ENCODE measurements at regions of chr1 and their contacts with region 1.

Region 1: GRCh38 chr1:203117611-203118575 is 9.6 kb upstream of the ADORA1 start:
- DNase-seq: peak in 2 of 3 donors; percentile 74 to 79
- ATAC-seq: peak; percentile 85
- H3K4me3 ChIP-seq: no peak overlapping the region
- H3K4me1 ChIP-seq: no peaks in the 10 kb centered on the region
- CTCF ChIP-seq: peak; percentile 68

Region 2: GRCh38 chr1:203216274-203217138 is 98.6 kb after region 1 on chr1:
- intact Hi-C with region 1: loop called (anchors 5 kb)
- DNase-seq: peak in 1 of 3 donors; percentile 73
- ATAC-seq: peak; percentile 72
- H3K4me3 ChIP-seq: no peak overlapping the region
- H3K4me1 ChIP-seq: no peaks in the 10 kb centered on the region
- CTCF ChIP-seq: peak; percentile 66